GM12878 (cell line): ENCODE measurements at regions of chr4 and their contacts with region 1.

Region 1: DNA sequence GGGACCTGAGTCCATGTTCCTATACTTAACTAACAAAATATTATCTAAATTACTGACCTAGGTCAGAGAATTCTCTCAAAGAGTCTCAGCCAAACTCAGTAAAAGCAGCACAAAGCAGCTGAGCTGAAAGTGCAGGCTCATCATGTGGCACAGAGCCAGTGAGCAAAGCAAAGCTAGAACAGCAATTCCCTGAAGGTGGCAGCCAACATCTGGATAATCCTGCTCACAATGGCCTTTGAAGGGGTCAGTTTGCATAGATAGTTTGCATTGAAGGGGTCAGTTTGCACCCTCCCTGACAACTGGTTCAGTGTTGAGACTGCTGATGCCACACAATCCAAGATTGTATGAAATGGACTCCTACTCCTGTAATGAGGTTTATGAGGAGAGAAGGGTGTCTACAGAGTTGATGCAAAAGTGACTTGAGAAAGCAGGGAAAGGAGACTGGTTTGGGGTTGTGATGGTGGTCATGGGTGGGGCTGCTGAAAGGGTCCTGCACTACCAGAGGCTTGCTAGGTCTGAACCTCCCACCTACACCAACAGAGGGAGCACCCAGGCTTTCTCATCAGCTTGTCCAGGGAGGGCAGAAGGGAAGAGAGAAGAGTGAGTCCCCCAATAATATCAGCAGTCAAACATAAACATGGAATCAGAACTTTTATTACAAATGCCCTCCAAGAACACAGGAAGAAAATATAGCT is 39.7 kb downstream of the TRIM61 start:
- DNase-seq: peak; percentile 25
- ATAC-seq: peak; percentile 71
- H3K4me3 ChIP-seq: no peak overlapping the region
- H3K27ac ChIP-seq: peak overlapping the region; percentile 30; the same call in 1 of the 2 replicates
- H3K4me1 ChIP-seq: peaks cover 23% of the 10 kb centered on the region
- H3K27me3 ChIP-seq: no peaks in the 10 kb centered on the region
- CTCF ChIP-seq: peak; percentile 43 to 65 (median 56)
- EP300 ChIP-seq: no peak
- POLR2A ChIP-seq: no peak
- RAD21 ChIP-seq: peak; percentile 46; the same call in 1 of the 2 replicates

Region 2: DNA sequence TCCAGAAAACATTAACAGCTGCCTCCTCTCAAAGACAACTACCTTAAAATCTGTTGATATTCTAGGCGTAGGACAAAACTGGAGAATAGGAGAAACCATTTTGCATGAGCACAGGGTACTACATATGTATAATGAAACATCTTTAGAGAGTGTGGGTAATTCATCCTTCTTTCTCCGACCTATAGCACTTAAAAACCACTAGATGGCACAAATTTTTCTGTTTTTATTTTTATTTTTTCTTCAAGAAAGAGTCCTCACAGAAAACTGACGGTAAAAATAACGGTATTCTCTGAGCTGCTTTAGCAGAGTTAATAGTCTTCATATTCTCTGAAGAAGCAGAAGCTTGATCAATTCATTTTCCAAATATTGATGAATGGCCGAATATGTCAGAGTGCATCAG is 169.2 kb before region 1 on chr4:
- CTCF ChIA-PET with region 1: interaction called, 15 read pairs
- POLR2A ChIA-PET with region 1: no interaction called
- RAD21 ChIA-PET with region 1: interaction called, 7 read pairs
- SMC1A ChIA-PET with region 1: interaction called, 6 read pairs
- in situ Hi-C with region 1: no loop called
- intact Hi-C with region 1: no loop called
- DNase-seq: no peak
- ATAC-seq: peak; percentile 72
- H3K4me3 ChIP-seq: no peak overlapping the region
- H3K27ac ChIP-seq: no peak overlapping the region
- H3K4me1 ChIP-seq: no peaks in the 10 kb centered on the region
- H3K27me3 ChIP-seq: no peaks in the 10 kb centered on the region
- CTCF ChIP-seq: peak; percentile 29 to 41 (median 31); a peak in 5 of 6 replicates
- EP300 ChIP-seq: no peak
- POLR2A ChIP-seq: no peak
- RAD21 ChIP-seq: 0 out of 2 replicates have a peak, but pooled peaks have one; percentile 29

Region 3: DNA sequence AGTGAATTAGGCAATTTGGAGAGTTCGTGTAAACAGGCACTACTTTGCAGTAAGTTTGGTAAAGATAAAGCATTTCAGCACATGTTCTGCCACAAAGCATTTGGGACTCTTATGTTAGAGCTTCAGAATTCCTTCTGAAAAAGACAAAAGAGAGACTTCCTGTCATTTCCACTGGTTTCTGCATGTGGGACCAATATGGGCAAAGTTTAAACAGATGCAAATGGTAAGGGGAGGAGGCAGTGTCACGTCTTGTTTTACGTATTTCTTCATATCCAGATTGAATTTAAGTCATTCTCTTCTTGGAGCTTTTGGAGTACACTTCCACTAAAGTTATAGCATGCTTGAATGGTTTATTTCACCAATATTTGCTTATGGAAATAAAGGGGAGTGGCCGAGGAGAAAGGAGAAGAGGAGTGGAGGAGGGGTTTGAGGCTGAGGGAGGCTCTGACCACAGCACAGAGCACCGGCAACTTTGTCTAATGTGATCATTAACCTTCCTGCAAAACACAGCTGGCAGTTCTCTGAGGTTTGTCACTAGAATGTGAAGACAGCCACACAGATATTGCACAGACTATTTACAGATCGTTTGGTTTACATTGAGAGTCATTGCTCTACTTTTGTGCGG is 60.9 kb before region 1 on chr4 and contains the start of gene APELA:
- CTCF ChIA-PET with region 1: interaction called, 7 read pairs
- POLR2A ChIA-PET with region 1: no interaction called
- RAD21 ChIA-PET with region 1: interaction called, 7 read pairs
- SMC1A ChIA-PET with region 1: interaction called, 13 read pairs
- in situ Hi-C with region 1: no loop called
- intact Hi-C with region 1: no loop called
- DNase-seq: peak; percentile 82
- ATAC-seq: peak; percentile 97
- H3K4me3 ChIP-seq: no peak within 1 kb of the TSS; the same call in 1 of the 2 replicates
- H3K27ac ChIP-seq: no peak within 1 kb of the TSS
- H3K4me1 ChIP-seq: no peaks in the 10 kb centered on the region
- H3K27me3 ChIP-seq: no peaks in the 10 kb centered on the region
- CTCF ChIP-seq: no peak
- EP300 ChIP-seq: peak; percentile 42 to 80; a peak in 2 of 4 replicates
- POLR2A ChIP-seq: no peak
- RAD21 ChIP-seq: no peak
- polyA plus RNA-seq, gene APELA: 1.2 TPM

Region 4: DNA sequence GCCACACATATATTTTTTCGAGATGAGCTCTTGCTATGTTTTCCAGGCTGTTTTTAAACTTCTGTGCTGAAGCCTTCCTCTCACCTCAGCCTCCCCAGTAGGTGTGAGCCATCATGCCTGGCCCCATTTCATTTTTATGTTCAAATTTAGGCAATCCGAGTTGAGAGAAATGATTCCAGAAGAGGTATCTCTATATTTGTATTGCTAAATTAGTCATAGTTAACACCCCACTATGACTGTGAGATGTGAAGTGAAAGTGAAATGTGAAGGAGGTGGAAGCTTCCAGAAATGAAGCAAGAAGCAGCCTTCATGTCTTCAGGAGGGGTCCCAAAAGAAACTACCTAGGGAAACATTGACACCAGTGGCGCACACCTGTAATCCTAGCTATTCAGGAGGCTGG is 43.0 kb before region 1 on chr4:
- CTCF ChIA-PET with region 1: interaction called, 4 read pairs
- POLR2A ChIA-PET with region 1: no interaction called
- RAD21 ChIA-PET with region 1: interaction called, 7 read pairs
- SMC1A ChIA-PET with region 1: interaction called, 23 read pairs
- in situ Hi-C with region 1: no loop called
- intact Hi-C with region 1: no loop called
- DNase-seq: peak; percentile 48
- ATAC-seq: peak; percentile 82
- H3K4me3 ChIP-seq: no peak overlapping the region
- H3K27ac ChIP-seq: no peak overlapping the region
- H3K4me1 ChIP-seq: peaks cover 24% of the 10 kb centered on the region
- H3K27me3 ChIP-seq: no peaks in the 10 kb centered on the region
- CTCF ChIP-seq: no peak
- EP300 ChIP-seq: 0 out of 4 replicates have a peak, but pooled peaks of 1 of the 2 experiments have one; percentile 38
- POLR2A ChIP-seq: no peak
- RAD21 ChIP-seq: no peak

Region 5: GRCh38 chr4:164956766-164957643 is 19.3 kb after region 1 on chr4:
- CTCF ChIA-PET with region 1: interaction called, 185 read pairs
- POLR2A ChIA-PET with region 1: interaction called, 4 read pairs
- RAD21 ChIA-PET with region 1: interaction called, 13 read pairs
- SMC1A ChIA-PET with region 1: interaction called, 24 read pairs
- in situ Hi-C with region 1: no loop called
- intact Hi-C with region 1: loop called (anchors 2 kb)
- DNase-seq: peak; percentile 39
- ATAC-seq: peak; percentile 100
- H3K4me3 ChIP-seq: peak overlapping the region; percentile 86
- H3K27ac ChIP-seq: peak overlapping the region; percentile 58
- H3K4me1 ChIP-seq: no peaks in the 10 kb centered on the region; the same call in 1 of the 2 replicates
- H3K27me3 ChIP-seq: no peaks in the 10 kb centered on the region
- CTCF ChIP-seq: no peak
- EP300 ChIP-seq: no peak
- POLR2A ChIP-seq: peak; percentile 94; the same call in 1 of the 2 replicates
- RAD21 ChIP-seq: no peak

Region 6: GRCh38 chr4:164997324-164997723 is 59.6 kb after region 1 on chr4:
- CTCF ChIA-PET with region 1: interaction called, 4 read pairs
- POLR2A ChIA-PET with region 1: no interaction called
- RAD21 ChIA-PET with region 1: interaction called, 4 read pairs
- SMC1A ChIA-PET with region 1: no interaction called
- in situ Hi-C with region 1: no loop called
- intact Hi-C with region 1: loop called (anchors 1 kb)
- DNase-seq: no peak
- ATAC-seq: peak; percentile 63
- H3K4me3 ChIP-seq: no peak overlapping the region
- H3K27ac ChIP-seq: no peak overlapping the region
- H3K4me1 ChIP-seq: no peaks in the 10 kb centered on the region
- H3K27me3 ChIP-seq: no peaks in the 10 kb centered on the region
- CTCF ChIP-seq: peak; percentile 25 to 40 (median 31); a peak in 3 of 6 replicates
- EP300 ChIP-seq: no peak
- POLR2A ChIP-seq: no peak
- RAD21 ChIP-seq: peak; percentile 76

Region 7: DNA sequence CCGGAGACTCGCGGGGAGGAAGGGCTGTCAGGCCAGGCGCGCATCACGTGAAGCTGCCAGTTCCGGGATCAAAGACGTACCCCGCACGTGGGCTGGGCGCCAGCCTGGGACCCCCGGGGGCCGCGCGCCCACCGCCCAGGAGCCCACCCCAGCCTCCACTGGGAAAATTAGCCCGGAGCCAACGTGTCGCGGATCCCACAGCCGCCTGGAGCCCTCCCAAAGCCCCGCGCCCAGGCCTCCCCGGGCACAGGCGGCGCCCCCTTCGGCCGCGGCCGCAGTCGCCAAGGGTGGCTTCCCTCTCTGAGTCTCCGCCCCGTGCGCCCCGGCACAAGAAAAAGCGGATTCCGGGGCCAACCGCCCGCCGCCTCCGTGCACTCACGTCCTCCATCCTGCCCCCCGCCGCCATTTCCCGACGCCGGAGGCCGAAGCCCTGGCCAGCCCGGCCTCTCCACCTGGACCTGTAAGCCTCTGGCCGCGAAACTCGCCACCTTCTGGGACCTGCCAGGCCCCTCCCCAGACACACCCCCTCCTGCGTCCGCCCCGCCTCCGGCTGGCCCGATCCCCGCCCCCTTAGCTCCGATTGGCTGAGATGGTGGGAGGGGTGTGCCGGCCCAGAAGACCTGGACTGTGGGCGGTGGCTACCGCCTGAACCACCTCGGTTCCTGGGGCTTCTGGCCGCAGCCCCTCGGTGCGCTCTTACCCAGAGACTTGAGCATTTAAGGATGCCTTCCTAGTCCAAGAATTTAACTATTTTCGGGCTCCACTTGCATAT is 174.8 kb after region 1 on chr4 and contains the start of gene TMEM192:
- CTCF ChIA-PET with region 1: interaction called, 14 read pairs
- POLR2A ChIA-PET with region 1: no interaction called
- RAD21 ChIA-PET with region 1: interaction called, 9 read pairs
- SMC1A ChIA-PET with region 1: no interaction called
- in situ Hi-C with region 1: no loop called
- intact Hi-C with region 1: no loop called
- DNase-seq: peak; percentile 70
- ATAC-seq: peak; percentile 98
- H3K4me3 ChIP-seq: peak within 1 kb of the TSS; percentile 84
- H3K27ac ChIP-seq: peak within 1 kb of the TSS; percentile 90
- H3K4me1 ChIP-seq: no peaks in the 10 kb centered on the region
- H3K27me3 ChIP-seq: no peaks in the 10 kb centered on the region
- CTCF ChIP-seq: peak; percentile 26 to 58 (median 36); a peak in 5 of 6 replicates
- EP300 ChIP-seq: no peak
- POLR2A ChIP-seq: peak; percentile 84
- RAD21 ChIP-seq: no peak
- polyA plus RNA-seq, gene TMEM192: 1.8 to 3.8 TPM

Region 8: DNA sequence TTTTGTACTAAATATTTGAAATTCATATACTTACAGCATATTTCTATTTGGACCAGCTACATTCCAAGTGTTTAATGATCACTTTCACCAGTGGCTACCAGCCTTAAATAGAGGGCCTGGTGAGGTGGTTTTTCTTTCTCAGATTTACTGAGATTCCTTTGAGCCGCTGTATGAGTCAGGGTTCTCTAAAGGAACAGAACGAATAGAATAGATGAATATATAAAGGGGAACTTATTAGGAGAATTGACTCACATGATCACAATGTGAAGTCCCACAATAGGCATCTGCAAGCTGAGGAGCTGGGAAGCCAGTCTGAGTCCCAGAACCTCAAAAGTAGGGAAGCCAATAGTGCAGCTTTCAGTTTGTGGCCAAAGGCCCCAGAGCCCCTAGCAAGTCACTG is 789.1 kb after region 1 on chr4:
- CTCF ChIA-PET with region 1: no interaction called
- POLR2A ChIA-PET with region 1: no interaction called
- RAD21 ChIA-PET with region 1: no interaction called
- SMC1A ChIA-PET with region 1: no interaction called
- in situ Hi-C with region 1: no loop called
- intact Hi-C with region 1: no loop called
- DNase-seq: no peak
- ATAC-seq: no peak
- H3K4me3 ChIP-seq: no peak overlapping the region
- H3K27ac ChIP-seq: no peak overlapping the region
- H3K4me1 ChIP-seq: no peaks in the 10 kb centered on the region
- H3K27me3 ChIP-seq: no peaks in the 10 kb centered on the region
- CTCF ChIP-seq: no peak
- EP300 ChIP-seq: no peak
- POLR2A ChIP-seq: no peak
- RAD21 ChIP-seq: no peak